ENCODE measurements at regions of chr1 and their contacts with region 1.

Region 1: DNA sequence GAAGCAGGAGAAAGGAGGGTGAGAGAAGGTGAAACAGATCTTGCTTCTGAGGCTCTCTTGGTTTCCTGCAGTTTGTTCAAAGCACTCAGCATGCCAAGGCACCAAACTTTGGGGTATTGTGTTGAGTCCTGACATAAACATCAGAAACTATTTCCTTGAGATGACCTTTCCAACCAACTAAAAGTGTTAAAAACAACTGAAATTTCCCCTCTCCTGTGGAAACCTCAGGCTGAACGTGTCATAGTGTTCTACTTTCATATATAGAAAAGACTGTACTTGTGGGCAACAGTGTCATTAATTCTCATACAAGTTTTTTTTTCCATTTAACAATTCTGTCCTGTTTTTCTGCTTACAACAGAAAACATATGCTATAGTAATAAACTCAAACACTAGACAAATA is 6.3 kb upstream of the LYST start:
- DNase-seq: peak in 1 of 2 donors; percentile 71
- ATAC-seq: peak; percentile 70 to 85 (median 83)
- H3K4me3 ChIP-seq: no peak overlapping the region
- H3K4me3 Mint-ChIP-seq: peak overlapping the region; percentile 75
- H3K27ac ChIP-seq: peak overlapping the region; percentile 76
- H3K27ac Mint-ChIP-seq: peak overlapping the region in 1 of 2 donors; percentile 96
- H3K4me1 ChIP-seq: peaks cover 62% of the 10 kb centered on the region
- H3K4me1 Mint-ChIP-seq: peaks cover 44 to 45% of the 10 kb centered on the region in 2 donors
- H3K27me3 ChIP-seq: no peaks in the 10 kb centered on the region
- H3K27me3 Mint-ChIP-seq: no peaks in the 10 kb centered on the region
- CTCF ChIP-seq: no peak

Region 2: DNA sequence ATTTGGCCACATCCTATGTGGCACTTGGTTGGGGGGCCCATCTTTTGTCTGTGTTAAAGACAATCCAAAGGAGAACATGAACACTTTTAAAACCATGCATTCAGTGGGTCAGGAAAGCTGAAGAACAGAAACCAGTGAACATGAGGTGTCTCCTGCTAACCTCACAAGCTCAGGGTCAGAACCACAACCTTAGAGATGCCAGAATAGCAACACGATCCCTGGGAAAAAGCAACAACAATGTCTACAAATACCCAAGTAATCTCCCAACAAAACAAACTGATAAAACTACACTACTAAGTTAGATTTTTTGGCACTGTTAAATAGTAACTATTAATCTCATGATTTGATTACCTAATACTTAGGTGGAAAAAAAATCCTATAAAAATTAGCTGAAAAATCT is 189.4 kb before region 1 on chr1:
- intact Hi-C with region 1: no loop called
- DNase-seq: no peak
- ATAC-seq: no peak
- H3K4me3 ChIP-seq: no peak overlapping the region
- H3K4me3 Mint-ChIP-seq: no peak overlapping the region
- H3K27ac ChIP-seq: no peak overlapping the region
- H3K27ac Mint-ChIP-seq: no peak overlapping the region
- H3K4me1 ChIP-seq: no peaks in the 10 kb centered on the region
- H3K4me1 Mint-ChIP-seq: no peaks in the 10 kb centered on the region
- H3K27me3 ChIP-seq: no peaks in the 10 kb centered on the region
- H3K27me3 Mint-ChIP-seq: no peaks in the 10 kb centered on the region
- CTCF ChIP-seq: no peak

Region 3: DNA sequence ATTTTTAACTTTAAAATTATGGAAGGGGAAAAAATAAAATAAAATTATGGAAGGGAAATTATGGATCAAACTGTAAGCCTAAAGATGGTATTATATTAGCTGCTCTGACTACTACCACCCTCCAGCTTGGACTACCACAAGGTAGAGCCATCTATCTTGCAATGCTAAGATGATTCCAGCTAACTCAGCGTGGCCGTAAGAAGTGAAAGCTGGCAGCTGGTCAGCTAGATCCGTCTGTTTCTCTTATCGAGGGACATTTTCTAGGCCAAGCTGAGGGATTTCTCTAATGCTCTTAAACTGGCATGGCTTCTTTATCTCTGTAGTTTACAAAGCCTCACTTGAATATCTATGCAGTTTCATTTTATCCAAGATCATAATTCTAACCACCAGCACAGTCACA is 37.8 kb before region 1 on chr1:
- intact Hi-C with region 1: loop called (anchors 5 kb)
- DNase-seq: no peak
- ATAC-seq: no peak
- H3K4me3 ChIP-seq: no peak overlapping the region
- H3K4me3 Mint-ChIP-seq: no peak overlapping the region
- H3K27ac ChIP-seq: no peak overlapping the region
- H3K27ac Mint-ChIP-seq: no peak overlapping the region
- H3K4me1 ChIP-seq: peaks cover 25% of the 10 kb centered on the region
- H3K4me1 Mint-ChIP-seq: peaks cover 11 to 21% of the 10 kb centered on the region in 2 donors
- H3K27me3 ChIP-seq: no peaks in the 10 kb centered on the region
- H3K27me3 Mint-ChIP-seq: no peaks in the 10 kb centered on the region
- CTCF ChIP-seq: no peak

Region 4: DNA sequence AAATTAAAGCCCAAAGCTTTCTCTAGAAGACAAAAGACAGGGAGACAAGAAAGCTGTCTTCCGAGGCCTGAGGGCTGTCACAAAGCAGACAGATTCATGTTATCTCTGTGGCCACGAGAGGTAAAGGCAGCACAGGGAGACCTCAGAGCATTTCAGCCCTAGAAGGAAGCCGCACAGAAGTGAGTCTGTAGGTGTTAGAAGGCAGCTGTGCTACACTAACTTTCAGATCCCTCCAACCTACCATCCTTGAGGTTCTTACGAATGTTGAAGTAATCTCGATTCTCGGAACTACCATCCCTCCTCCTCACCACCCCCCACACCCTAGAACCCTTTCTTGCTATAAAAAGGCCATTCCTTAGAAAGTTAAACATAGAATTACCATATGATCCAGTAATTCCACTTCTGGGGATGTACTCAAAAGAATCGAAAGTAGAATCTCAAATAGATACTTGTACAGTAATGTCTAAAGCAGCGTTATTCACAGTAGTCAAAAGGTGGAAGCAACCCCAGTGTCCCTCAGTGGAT is 15.1 kb after region 1 on chr1:
- intact Hi-C with region 1: loop called (anchors 2 kb)
- DNase-seq: peak in 1 of 2 donors; percentile 79
- ATAC-seq: peak; percentile 70 to 84 (median 80)
- H3K4me3 ChIP-seq: no peak overlapping the region
- H3K4me3 Mint-ChIP-seq: no peak overlapping the region
- H3K27ac ChIP-seq: peak overlapping the region; percentile 67
- H3K27ac Mint-ChIP-seq: peak overlapping the region; percentile 80 to 90
- H3K4me1 ChIP-seq: peaks cover 43% of the 10 kb centered on the region
- H3K4me1 Mint-ChIP-seq: peaks cover 31 to 40% of the 10 kb centered on the region in 2 donors
- H3K27me3 ChIP-seq: no peaks in the 10 kb centered on the region
- H3K27me3 Mint-ChIP-seq: no peaks in the 10 kb centered on the region
- CTCF ChIP-seq: no peak